ENCODE measurements at regions of chr17 and their contacts with region 1.

Region 1: DNA sequence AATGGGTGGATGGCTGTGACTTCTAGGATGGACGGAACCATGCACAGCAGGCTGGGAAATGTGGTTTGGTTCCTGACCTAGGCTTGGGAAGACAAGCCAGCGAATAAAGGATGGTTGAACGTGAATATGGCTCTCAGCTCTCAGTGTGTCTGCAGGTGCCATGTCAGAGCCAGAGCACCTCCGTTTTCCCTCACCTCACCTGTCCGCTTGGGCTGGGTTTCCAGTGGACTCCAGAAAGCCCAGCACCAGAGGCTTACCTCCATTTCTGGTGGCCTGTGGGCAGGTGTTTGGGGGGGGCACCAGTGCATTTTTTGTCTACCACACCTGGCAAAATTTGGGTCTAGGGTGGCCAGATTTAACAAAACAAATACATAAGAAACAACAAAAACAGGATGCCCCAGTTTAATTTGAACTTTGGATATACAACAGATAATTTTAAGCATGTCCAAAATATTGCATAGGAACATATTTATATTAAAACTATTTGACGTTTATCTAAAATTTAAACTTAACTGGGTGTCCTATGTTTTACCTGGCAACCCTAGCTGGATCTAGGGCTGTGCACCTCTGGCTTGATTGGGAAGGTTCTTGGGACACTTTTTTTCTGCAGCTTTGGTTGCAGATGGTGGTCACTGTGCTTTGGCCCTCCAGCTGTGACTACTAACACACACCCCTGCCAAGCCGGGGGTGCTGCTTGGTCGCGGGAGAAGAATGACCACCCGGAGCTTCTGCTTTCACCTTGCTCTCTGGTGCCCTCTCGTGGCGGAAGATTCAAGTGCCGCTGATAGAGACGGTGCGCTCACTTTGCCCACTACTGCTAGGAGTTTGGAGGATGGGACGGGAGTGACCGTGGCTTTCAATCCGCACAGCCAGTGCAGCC is 6.3 kb downstream of the SPACA3 start:
- DNase-seq: peak; percentile 87
- H3K4me3 ChIP-seq: peak overlapping the region; percentile 68
- H3K27ac ChIP-seq: peak overlapping the region; percentile 65
- H3K4me1 ChIP-seq: peaks cover 11% of the 10 kb centered on the region; the same call in 1 of the 2 replicates
- H3K27me3 ChIP-seq: no peaks in the 10 kb centered on the region

Region 2: DNA sequence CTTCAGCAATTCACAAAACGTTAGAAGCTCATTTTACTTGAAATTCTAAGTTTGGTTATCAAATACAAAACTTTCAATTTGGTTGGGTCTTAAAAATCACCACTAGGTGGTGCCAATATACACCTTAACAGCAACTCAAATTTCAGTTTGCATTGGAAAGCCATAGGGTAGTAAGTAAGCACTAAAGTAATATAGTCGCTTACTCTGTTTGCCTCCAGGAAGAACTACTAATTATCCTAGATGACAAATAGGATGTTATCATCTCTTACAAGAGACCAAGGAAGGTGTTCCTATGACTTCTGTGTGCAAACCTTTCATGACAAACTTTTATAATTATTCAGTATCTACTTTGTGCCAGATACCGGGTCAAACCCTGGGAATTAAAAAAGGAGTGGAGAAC is 214.4 kb before region 1 on chr17:
- in situ Hi-C with region 1: loop called (anchors 10 kb)
- DNase-seq: peak; percentile 80
- H3K4me3 ChIP-seq: no peak overlapping the region
- H3K27ac ChIP-seq: no peak overlapping the region
- H3K4me1 ChIP-seq: no peaks in the 10 kb centered on the region
- H3K27me3 ChIP-seq: no peaks in the 10 kb centered on the region